Activated naive CD4-positive, alpha-beta T cell treated with anti-CD3 and anti-CD28 coated beads, Interleukin-2, amount 10 ng/mL, durations not matched to agents 7 days and 5 days (primary cell): ENCODE measurements at regions of chr7 and their contacts with region 1.

Region 1: DNA sequence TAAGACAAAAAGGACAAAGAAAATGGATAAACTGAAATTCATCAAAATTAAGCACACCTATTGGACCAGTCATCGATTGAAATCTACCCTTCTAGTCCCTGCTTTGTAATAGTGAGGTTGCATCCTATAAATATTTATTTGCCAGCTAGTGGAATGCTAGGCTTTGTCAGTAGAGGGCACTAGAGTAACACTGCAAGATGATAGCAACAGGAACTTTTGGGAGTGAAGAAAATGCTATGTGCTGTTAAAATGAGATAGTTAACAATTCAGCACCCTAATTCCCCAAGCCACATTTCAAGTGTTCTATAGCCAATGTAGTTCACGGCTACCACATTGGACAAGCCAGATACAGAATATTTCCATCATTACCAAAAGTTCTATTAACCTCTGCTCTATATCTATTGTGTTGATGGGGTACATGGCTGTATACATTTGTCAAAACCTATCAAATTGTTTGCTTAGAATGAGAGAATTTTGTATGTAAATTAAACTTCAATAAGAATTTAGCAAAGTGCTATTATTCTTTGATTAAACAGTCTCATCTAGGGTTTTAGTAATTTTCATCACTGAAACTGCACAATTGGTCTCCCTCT is 69.8 kb downstream of the LSMEM1 start:
- DNase-seq: peak; percentile 26
- H3K4me3 Mint-ChIP-seq: no peak overlapping the region
- H3K27ac Mint-ChIP-seq: no peak overlapping the region
- H3K4me1 Mint-ChIP-seq: no peaks in the 10 kb centered on the region
- H3K27me3 Mint-ChIP-seq: no peaks in the 10 kb centered on the region

Region 2: DNA sequence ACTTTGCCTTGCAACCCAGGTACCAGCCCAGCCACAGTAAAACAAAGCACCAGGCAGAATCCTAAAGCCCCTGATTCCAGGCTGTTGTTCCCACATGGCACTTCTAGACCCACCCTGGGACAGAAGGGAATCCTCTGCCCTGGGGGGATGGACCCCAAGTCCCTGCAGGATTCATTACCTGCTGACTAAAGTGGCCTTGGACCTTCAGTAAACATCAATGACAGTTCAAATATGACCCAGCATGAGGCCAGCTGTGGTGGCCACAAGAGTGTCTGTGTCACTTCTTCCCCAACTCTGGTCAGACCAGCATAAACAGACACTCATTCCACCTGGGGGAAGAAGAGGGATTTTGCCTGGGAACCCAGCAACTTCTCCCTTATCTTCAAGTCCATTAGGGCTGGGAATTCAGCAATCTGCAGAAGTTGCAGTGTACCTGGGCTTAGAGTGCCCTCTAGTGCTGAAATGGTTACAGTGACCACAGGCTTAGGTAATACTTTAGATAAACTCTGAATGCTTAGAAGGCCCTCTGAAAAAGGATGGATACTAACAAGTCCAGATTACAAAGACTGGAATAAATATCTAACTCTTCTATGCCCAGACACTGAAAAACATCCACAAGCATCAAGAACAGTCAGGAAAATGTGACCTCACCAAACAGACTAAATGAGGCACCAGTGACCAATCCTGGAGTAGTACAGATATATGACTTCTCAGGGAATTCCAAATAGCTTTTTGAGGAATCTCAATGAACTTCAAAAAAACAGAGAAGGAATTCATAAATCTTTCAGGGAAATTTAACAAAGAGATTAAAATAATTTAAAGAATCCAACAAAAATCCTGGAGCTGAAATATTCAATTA is 348.1 kb after region 1 on chr7:
- CTCF ChIA-PET with region 1: interaction called, 16 read pairs
- DNase-seq: peak; percentile 57
- H3K4me3 Mint-ChIP-seq: no peak overlapping the region
- H3K27ac Mint-ChIP-seq: no peak overlapping the region
- H3K4me1 Mint-ChIP-seq: no peaks in the 10 kb centered on the region
- H3K27me3 Mint-ChIP-seq: no peaks in the 10 kb centered on the region

Region 3: DNA sequence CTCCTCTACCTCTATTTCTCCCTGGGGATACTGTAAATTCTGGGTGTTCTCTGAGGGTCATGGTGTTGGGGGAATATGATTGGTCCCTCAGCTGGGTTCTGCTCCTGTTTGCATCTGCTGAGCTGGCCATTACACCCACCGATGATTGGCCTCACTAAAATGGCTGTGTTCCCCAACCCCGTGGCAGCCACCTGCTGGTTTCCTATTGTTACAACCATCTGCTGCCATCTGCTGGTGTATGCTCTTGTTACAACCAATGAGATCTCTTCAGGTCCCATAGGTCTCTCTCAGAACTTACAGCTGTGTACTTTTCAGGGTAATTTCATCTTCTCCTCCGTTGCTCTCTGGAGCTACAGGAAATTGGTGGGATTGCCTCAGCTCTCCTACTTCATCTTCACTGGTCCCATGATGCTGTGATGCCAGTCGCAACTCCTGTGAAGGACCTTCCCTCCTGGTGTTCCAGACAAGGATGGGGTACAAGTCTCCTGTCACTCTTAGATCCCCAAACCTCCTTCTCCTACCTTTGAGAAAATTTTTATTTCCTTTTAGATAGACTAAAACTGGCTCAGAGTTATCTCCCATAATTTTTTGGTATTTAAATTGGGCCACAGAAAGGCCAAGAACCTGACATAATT is 871.2 kb after region 1 on chr7:
- CTCF ChIA-PET with region 1: interaction called, 23 read pairs
- DNase-seq: peak; percentile 79
- H3K4me3 Mint-ChIP-seq: no peak overlapping the region
- H3K27ac Mint-ChIP-seq: no peak overlapping the region
- H3K4me1 Mint-ChIP-seq: peaks cover 3% of the 10 kb centered on the region
- H3K27me3 Mint-ChIP-seq: no peaks in the 10 kb centered on the region